Naive thymus-derived CD4-positive, alpha-beta T cell (primary cell): ENCODE measurements at regions of chr5 and their contacts with region 1.

Region 1: GRCh38 chr5:81425569-81425968 is 31.6 kb upstream of the ACOT12 start:
- DNase-seq: peak in 7 of 9 donors; percentile 15 to 72 (median 58)
- ATAC-seq: peak; percentile 73
- H3K4me3 ChIP-seq: no peak overlapping the region
- H3K4me3 Mint-ChIP-seq: peak overlapping the region in 2 of 10 donors; percentile 6 to 8
- H3K27ac ChIP-seq: no peak overlapping the region
- H3K27ac Mint-ChIP-seq: peak overlapping the region in 6 of 9 donors; percentile 9 to 65 (median 48)
- H3K4me1 ChIP-seq: peaks cover 0 to 6% of the 10 kb centered on the region in 2 donors
- H3K4me1 Mint-ChIP-seq: peaks cover 3 to 25% (median 13%) of the 10 kb centered on the region in 7 donors
- H3K27me3 ChIP-seq: no peaks in the 10 kb centered on the region
- H3K27me3 Mint-ChIP-seq: no peaks in the 10 kb centered on the region

Region 2: GRCh38 chr5:81401266-81401665 is 24.3 kb before region 1 on chr5:
- CTCF ChIA-PET with region 1: no interaction called
- POLR2A ChIA-PET with region 1: no interaction called
- intact Hi-C with region 1: no loop called
- DNase-seq: no peak
- ATAC-seq: no peak
- H3K4me3 ChIP-seq: no peak overlapping the region
- H3K4me3 Mint-ChIP-seq: no peak overlapping the region
- H3K27ac ChIP-seq: no peak overlapping the region
- H3K27ac Mint-ChIP-seq: no peak overlapping the region
- H3K4me1 ChIP-seq: no peaks in the 10 kb centered on the region
- H3K4me1 Mint-ChIP-seq: peaks cover 0 to 2% (median 0%) of the 10 kb centered on the region in 7 donors
- H3K27me3 ChIP-seq: no peaks in the 10 kb centered on the region
- H3K27me3 Mint-ChIP-seq: peaks cover 3 to 28% (median 16%) of the 10 kb centered on the region in 5 donors

Region 3: DNA sequence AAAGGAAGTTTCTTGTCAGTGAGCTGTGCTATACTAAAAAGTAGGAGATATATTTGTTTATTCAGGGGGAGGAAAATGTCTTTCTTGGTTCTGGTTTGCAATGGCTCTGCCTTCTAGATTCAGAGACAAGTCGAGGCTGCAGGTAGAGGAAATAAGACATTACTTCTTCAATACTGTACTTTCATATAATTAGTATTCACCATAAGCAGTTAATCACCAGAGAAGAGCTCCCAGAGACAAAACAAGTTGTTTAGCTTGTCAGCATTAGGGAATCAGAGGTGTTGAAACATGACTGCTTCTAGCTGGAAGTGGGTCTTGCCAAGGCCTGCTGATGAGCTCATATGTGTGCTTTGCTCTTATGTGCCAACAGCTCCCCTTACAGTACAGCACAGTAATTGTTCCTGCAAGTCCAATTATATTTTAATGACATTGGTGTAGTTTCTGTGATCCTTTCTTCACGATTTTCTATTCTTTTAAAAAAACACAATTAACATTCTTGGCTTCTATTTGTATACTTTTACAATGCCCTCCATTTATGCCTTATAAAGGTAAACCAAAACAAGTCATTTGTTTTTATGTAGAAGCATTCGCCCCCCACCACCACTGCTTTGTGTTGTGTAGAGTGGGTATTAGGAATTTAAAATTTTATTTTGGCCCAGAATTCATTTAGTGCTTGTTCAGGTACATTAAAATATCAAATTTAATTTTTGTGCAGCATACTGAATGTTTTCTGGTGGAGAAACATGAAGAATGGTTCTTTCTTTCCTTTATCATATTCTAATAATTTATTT is 740.4 kb after region 1 on chr5:
- CTCF ChIA-PET with region 1: interaction called, 30 read pairs
- POLR2A ChIA-PET with region 1: no interaction called
- intact Hi-C with region 1: loop called (anchors 1 kb)
- DNase-seq: peak in 7 of 9 donors; percentile 39 to 70 (median 58)
- ATAC-seq: peak; percentile 96
- H3K4me3 ChIP-seq: no peak overlapping the region
- H3K4me3 Mint-ChIP-seq: no peak overlapping the region
- H3K27ac ChIP-seq: no peak overlapping the region
- H3K27ac Mint-ChIP-seq: peak overlapping the region in 6 of 9 donors; percentile 3 to 65 (median 17)
- H3K4me1 ChIP-seq: no peaks in the 10 kb centered on the region
- H3K4me1 Mint-ChIP-seq: peaks cover 0 to 12% (median 7%) of the 10 kb centered on the region in 7 donors
- H3K27me3 ChIP-seq: no peaks in the 10 kb centered on the region
- H3K27me3 Mint-ChIP-seq: no peaks in the 10 kb centered on the region

Region 4: GRCh38 chr5:82259172-82259800 is 833.7 kb after region 1 on chr5:
- CTCF ChIA-PET with region 1: interaction called, 3 read pairs
- POLR2A ChIA-PET with region 1: no interaction called
- intact Hi-C with region 1: loop called in 1 of 2 experiments (anchors 1 kb)
- DNase-seq: no peak
- ATAC-seq: no peak
- H3K4me3 ChIP-seq: no peak overlapping the region
- H3K4me3 Mint-ChIP-seq: no peak overlapping the region
- H3K27ac ChIP-seq: no peak overlapping the region
- H3K27ac Mint-ChIP-seq: no peak overlapping the region
- H3K4me1 ChIP-seq: no peaks in the 10 kb centered on the region
- H3K4me1 Mint-ChIP-seq: no peaks in the 10 kb centered on the region
- H3K27me3 ChIP-seq: no peaks in the 10 kb centered on the region
- H3K27me3 Mint-ChIP-seq: no peaks in the 10 kb centered on the region